IMR-90 (cell line): ENCODE measurements at regions of chr14 and their contacts with region 1.

Region 1: GRCh38 chr14:21557084-21557901 is 22.6 kb downstream of the OR10G3 start:
- DNase-seq: peak; percentile 85
- ATAC-seq: peak; percentile 92
- H3K4me3 ChIP-seq: peak overlapping the region; percentile 17; the same call in 1 of the 2 replicates
- H3K27ac ChIP-seq: no peak overlapping the region
- H3K4me1 ChIP-seq: no peaks in the 10 kb centered on the region
- H3K27me3 ChIP-seq: no peaks in the 10 kb centered on the region
- CTCF ChIP-seq: peak; percentile 80
- POLR2A ChIP-seq: no peak
- RAD21 ChIP-seq: peak; percentile 81

Region 2: DNA sequence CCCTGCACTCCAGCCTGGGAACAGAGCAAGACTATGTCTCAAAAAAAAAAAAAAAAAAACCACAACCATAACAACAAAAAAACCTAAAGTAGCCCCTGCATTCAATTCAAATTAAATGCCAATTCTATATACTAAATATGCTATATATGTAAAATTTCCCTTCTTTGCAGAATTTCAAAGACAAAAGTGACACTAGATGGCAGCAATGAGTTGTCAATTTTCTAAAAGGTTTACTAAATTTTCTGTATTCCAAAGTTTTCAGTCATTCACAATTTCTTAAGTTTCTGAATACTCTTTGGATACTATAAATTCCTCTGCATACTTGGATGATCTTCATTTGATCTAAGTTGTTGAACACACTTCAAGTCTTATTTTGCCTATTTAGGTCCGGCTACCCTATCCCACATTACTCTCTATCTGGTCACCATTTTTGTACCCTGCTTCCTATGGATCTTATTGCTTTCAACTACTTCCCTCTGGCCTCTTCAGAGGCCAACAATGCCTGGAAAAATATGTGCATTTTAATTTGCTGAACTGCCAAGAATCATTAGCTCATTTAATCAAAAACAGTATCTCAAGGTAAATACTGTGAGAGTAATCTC is 316.0 kb before region 1 on chr14:
- CTCF ChIA-PET with region 1: no interaction called
- POLR2A ChIA-PET with region 1: no interaction called
- dilution Hi-C with region 1: no loop called
- in situ Hi-C with region 1: no loop called
- intact Hi-C with region 1: loop called (anchors 10 kb)
- DNase-seq: peak; percentile 38
- ATAC-seq: peak; percentile 8; the same call in 1 of the 2 replicates
- H3K4me3 ChIP-seq: no peak overlapping the region
- H3K27ac ChIP-seq: no peak overlapping the region
- H3K4me1 ChIP-seq: peaks cover 1% of the 10 kb centered on the region
- H3K27me3 ChIP-seq: no peaks in the 10 kb centered on the region
- CTCF ChIP-seq: peak; percentile 40
- POLR2A ChIP-seq: no peak
- RAD21 ChIP-seq: peak; percentile 25

Region 3: DNA sequence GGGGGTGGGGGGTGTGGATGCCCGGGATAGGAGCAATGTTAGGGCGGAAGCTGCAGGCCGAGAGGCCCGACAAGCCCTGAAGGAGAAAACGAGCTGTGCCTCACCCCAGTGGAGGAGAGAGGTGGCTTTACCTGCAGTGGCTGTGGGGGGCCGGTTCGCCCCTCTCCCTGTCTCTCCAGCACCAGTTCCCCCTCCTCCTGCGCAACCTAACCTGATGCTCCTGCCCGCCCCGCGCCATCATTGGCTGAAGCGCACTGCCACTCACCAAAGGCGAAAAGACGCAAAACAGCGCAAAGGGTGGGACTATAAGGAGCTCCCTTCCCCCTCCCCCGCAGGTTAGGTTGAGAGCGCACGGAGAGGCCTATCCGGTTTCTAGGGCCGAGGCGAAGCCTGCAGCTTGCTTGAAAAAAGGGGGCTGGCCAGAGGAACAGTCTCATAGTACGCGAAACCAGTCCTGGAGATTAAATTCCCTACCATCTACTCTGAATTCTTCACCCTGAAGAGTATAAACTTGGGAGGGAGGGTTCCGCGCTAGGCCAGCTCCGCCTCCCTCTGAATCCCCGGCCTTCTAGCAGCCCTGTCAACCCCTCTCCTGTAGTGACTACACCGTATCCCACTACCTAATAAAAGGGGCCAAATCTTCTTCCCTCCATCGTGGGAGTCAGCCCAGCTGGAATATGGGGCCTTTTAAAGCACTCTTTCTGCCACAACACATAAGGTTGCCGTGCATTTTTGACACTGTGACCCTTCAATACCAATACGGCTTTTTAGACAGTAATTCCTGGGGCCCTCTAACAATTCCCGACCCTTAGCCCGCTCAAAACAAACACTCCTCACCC is 120.0 kb before region 1 on chr14:
- CTCF ChIA-PET with region 1: no interaction called
- POLR2A ChIA-PET with region 1: no interaction called
- dilution Hi-C with region 1: no loop called
- in situ Hi-C with region 1: no loop called
- intact Hi-C with region 1: loop called (anchors 1 kb)
- DNase-seq: peak; percentile 99
- ATAC-seq: peak; percentile 100
- H3K4me3 ChIP-seq: peak overlapping the region; percentile 90
- H3K27ac ChIP-seq: peak overlapping the region; percentile 90
- H3K4me1 ChIP-seq: peaks cover 5% of the 10 kb centered on the region
- H3K27me3 ChIP-seq: no peaks in the 10 kb centered on the region
- CTCF ChIP-seq: no peak
- POLR2A ChIP-seq: no peak
- RAD21 ChIP-seq: no peak

Region 4: GRCh38 chr14:21455911-21456667 is 101.2 kb before region 1 on chr14 and contains the start of gene CHD8:
- CTCF ChIA-PET with region 1: no interaction called
- POLR2A ChIA-PET with region 1: no interaction called
- dilution Hi-C with region 1: no loop called
- in situ Hi-C with region 1: no loop called
- intact Hi-C with region 1: loop called (anchors 1 kb)
- DNase-seq: peak; percentile 100
- ATAC-seq: peak; percentile 99
- H3K4me3 ChIP-seq: peak within 1 kb of the TSS; percentile 81
- H3K27ac ChIP-seq: peak within 1 kb of the TSS; percentile 94
- H3K4me1 ChIP-seq: no peaks in the 10 kb centered on the region; the same call in 1 of the 2 replicates
- H3K27me3 ChIP-seq: no peaks in the 10 kb centered on the region
- CTCF ChIP-seq: peak; percentile 82
- POLR2A ChIP-seq: peak; percentile 67
- RAD21 ChIP-seq: peak; percentile 38
- total RNA-seq, gene CHD8: 55.0 and 58.9 TPM in 2 replicates

Region 5: GRCh38 chr14:21476925-21477681 is 80.2 kb before region 1 on chr14 and contains the starts of genes RAB2B and TOX4:
- CTCF ChIA-PET with region 1: no interaction called
- POLR2A ChIA-PET with region 1: no interaction called
- dilution Hi-C with region 1: no loop called
- in situ Hi-C with region 1: no loop called
- intact Hi-C with region 1: loop called (anchors 1 kb)
- DNase-seq: peak; percentile 99
- ATAC-seq: peak; percentile 100
- H3K4me3 ChIP-seq: peak within 1 kb of the TSS; percentile 90
- H3K27ac ChIP-seq: peak within 1 kb of the TSS; percentile 90
- H3K4me1 ChIP-seq: no peaks in the 10 kb centered on the region; the same call in 1 of the 2 replicates
- H3K27me3 ChIP-seq: no peaks in the 10 kb centered on the region
- CTCF ChIP-seq: peak; percentile 100; the same call in 1 of the 2 replicates
- POLR2A ChIP-seq: peak; percentile 95
- RAD21 ChIP-seq: peak; percentile 53; the same call in 1 of the 2 replicates
- total RNA-seq, gene RAB2B: 25.0 and 26.2 TPM in 2 replicates
- total RNA-seq, gene TOX4: 26.7 and 31.7 TPM in 2 replicates

Region 6: GRCh38 chr14:21498553-21499526 is 58.5 kb before region 1 on chr14:
- CTCF ChIA-PET with region 1: interaction called, 8 read pairs
- POLR2A ChIA-PET with region 1: interaction called, 5 read pairs
- dilution Hi-C with region 1: no loop called
- in situ Hi-C with region 1: loop called (anchors 5 kb)
- intact Hi-C with region 1: loop called (anchors 1 kb)
- DNase-seq: peak; percentile 73
- ATAC-seq: peak; percentile 41; the same call in 1 of the 2 replicates
- H3K4me3 ChIP-seq: no peak overlapping the region
- H3K27ac ChIP-seq: peak overlapping the region; percentile 33; the same call in 1 of the 2 replicates
- H3K4me1 ChIP-seq: peaks cover 6% of the 10 kb centered on the region
- H3K27me3 ChIP-seq: no peaks in the 10 kb centered on the region
- CTCF ChIP-seq: peak; percentile 49
- POLR2A ChIP-seq: no peak
- RAD21 ChIP-seq: peak; percentile 46

Region 7: GRCh38 chr14:21510735-21511657 is 46.3 kb before region 1 on chr14 and contains the start of gene METTL3:
- CTCF ChIA-PET with region 1: no interaction called
- POLR2A ChIA-PET with region 1: no interaction called
- dilution Hi-C with region 1: no loop called
- in situ Hi-C with region 1: no loop called
- intact Hi-C with region 1: loop called (anchors 5 kb)
- DNase-seq: peak; percentile 99
- ATAC-seq: peak; percentile 99
- H3K4me3 ChIP-seq: peak within 1 kb of the TSS; percentile 68
- H3K27ac ChIP-seq: peak within 1 kb of the TSS; percentile 76
- H3K4me1 ChIP-seq: no peaks in the 10 kb centered on the region
- H3K27me3 ChIP-seq: no peaks in the 10 kb centered on the region
- CTCF ChIP-seq: no peak
- POLR2A ChIP-seq: peak; percentile 71; the same call in 1 of the 2 replicates
- RAD21 ChIP-seq: no peak
- total RNA-seq, gene METTL3: 68.9 and 109 TPM in 2 replicates

Region 8: GRCh38 chr14:21711360-21711961 is 154.2 kb after region 1 on chr14:
- CTCF ChIA-PET with region 1: no interaction called
- POLR2A ChIA-PET with region 1: no interaction called
- dilution Hi-C with region 1: no loop called
- in situ Hi-C with region 1: no loop called
- intact Hi-C with region 1: no loop called
- DNase-seq: peak; percentile 53
- ATAC-seq: peak; percentile 85
- H3K4me3 ChIP-seq: no peak overlapping the region
- H3K27ac ChIP-seq: no peak overlapping the region
- H3K4me1 ChIP-seq: no peaks in the 10 kb centered on the region
- H3K27me3 ChIP-seq: no peaks in the 10 kb centered on the region
- CTCF ChIP-seq: peak; percentile 67
- POLR2A ChIP-seq: no peak
- RAD21 ChIP-seq: peak; percentile 23; the same call in 1 of the 2 replicates